Ovary (tissue), 10 donors: ENCODE measurements at regions of chr2 and their contacts with region 1.

Region 1: GRCh38 chr2:162524849-162525248 is 180.9 kb downstream of the GCA start:
- DNase-seq: no peak
- H3K4me3 ChIP-seq: no peak overlapping the region
- H3K27ac ChIP-seq: no peak overlapping the region
- H3K4me1 ChIP-seq: no peaks in the 10 kb centered on the region
- H3K27me3 ChIP-seq: no peaks in the 10 kb centered on the region
- CTCF ChIP-seq: no peak
- EP300 ChIP-seq: no peak
- POLR2A ChIP-seq: no peak

Region 2: GRCh38 chr2:162493411-162493810 is 31.4 kb before region 1 on chr2:
- intact Hi-C with region 1: loop called in 1 of 4 experiments (anchors 1 kb)
- DNase-seq: no peak
- H3K4me3 ChIP-seq: no peak overlapping the region
- H3K27ac ChIP-seq: no peak overlapping the region
- H3K4me1 ChIP-seq: no peaks in the 10 kb centered on the region
- H3K27me3 ChIP-seq: no peaks in the 10 kb centered on the region
- CTCF ChIP-seq: no peak
- EP300 ChIP-seq: no peak
- POLR2A ChIP-seq: no peak